Esophagus muscularis mucosa (tissue), 4 donors: ENCODE measurements at regions of chr5 and their contacts with region 1.

Region 1: GRCh38 chr5:67003935-67004729 is 192.5 kb downstream of the CD180 start:
- DNase-seq: peak; percentile 96
- H3K4me3 ChIP-seq: peak overlapping the region; percentile 63 to 70 (median 65)
- H3K27ac ChIP-seq: peak overlapping the region; percentile 87 to 93 (median 87)
- H3K4me1 ChIP-seq: peaks cover 35 to 55% (median 48%) of the 10 kb centered on the region in 4 donors
- H3K27me3 ChIP-seq: no peaks in the 10 kb centered on the region
- CTCF ChIP-seq: no peak
- EP300 ChIP-seq: no peak
- POLR2A ChIP-seq: peak; percentile 12

Region 2: DNA sequence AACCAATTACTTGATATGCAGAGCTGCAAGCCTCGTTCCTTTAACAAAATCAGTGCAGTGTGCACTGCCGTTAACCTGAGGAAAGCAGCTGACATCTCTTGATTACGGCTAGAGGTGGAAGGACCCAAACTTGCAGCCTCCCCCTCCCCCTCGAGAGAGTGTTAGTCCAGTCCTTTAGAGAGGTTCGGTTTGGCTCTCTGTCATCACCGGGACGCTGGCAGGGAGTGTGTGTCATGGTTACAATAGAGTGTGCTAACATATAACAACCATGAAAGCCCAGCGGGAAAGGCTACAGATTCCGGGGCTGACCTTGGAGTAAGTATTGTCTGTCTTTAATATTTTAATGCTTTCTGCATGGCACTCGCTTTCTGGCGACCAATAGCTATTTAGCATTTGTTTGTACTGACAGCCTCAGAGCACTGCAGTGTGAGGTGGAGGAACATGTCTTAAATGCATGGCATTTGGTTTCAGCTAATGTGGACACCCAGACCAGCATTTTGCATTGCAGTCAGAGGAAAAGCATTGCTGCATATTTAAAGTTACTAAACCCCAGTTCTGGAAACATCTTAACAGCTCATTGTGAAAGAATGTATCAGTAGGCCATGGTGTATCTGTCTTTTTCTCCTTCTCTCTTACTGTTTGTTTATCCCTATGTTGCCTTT is 45.0 kb before region 1 on chr5:
- intact Hi-C with region 1: loop called (anchors 5 kb)
- DNase-seq: no peak
- H3K4me3 ChIP-seq: peak overlapping the region; percentile 48 to 55 (median 50)
- H3K27ac ChIP-seq: peak overlapping the region; percentile 66 to 79 (median 72)
- H3K4me1 ChIP-seq: peaks cover 6 to 32% (median 29%) of the 10 kb centered on the region in 4 donors
- H3K27me3 ChIP-seq: no peaks in the 10 kb centered on the region
- CTCF ChIP-seq: no peak
- EP300 ChIP-seq: no peak
- POLR2A ChIP-seq: no peak

Region 3: DNA sequence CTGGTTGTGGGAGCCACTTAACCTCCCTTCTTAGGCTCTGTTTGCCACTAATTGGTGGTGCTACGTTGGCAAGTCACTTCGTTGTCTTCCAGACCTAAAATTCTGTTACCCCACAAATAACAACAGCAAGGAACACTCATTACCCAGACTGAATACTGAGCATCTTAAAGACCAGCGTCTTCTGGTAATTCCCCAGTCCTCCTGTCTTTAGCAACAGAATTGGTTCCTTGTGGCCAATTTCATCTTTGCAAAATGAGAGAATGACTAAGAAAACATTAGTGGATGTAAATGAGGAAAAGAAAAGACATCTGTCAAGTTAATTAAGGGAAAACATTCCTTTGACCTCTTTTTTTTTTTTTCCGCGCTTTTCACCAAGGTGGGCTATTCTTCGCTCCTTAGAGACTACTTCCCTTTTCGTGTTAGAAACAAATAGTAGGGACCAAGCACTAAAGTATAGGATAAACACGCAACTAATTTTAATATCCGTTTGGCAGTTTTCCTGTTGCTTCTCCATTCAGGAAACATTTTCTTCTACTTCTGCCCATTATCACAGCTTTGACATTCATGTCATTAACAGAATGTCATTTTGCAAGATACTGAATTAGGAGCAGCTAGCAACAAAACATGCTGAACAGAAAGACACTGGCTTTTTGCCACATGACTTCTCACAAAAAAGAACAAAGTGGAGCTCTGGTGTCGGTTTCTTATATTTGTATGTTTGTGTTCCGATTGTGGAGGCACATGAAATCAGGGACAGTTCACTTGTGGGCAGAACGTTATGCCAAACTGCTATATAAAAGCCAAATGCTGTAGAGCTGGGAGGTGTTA is 38.3 kb after region 1 on chr5:
- intact Hi-C with region 1: loop called (anchors 5 kb)
- DNase-seq: no peak
- H3K4me3 ChIP-seq: no peak overlapping the region
- H3K27ac ChIP-seq: peak overlapping the region in 1 of 4 donors; percentile 5
- H3K4me1 ChIP-seq: peaks cover 54 to 73% (median 64%) of the 10 kb centered on the region in 4 donors
- H3K27me3 ChIP-seq: no peaks in the 10 kb centered on the region
- CTCF ChIP-seq: no peak
- EP300 ChIP-seq: no peak
- POLR2A ChIP-seq: no peak

Region 4: GRCh38 chr5:67095346-67096171 is 91.4 kb after region 1 on chr5:
- intact Hi-C with region 1: loop called (anchors 5 kb)
- DNase-seq: no peak
- H3K4me3 ChIP-seq: peak overlapping the region; percentile 15 to 30 (median 18)
- H3K27ac ChIP-seq: peak overlapping the region; percentile 58 to 64 (median 62)
- H3K4me1 ChIP-seq: peaks cover 36 to 59% (median 57%) of the 10 kb centered on the region in 4 donors
- H3K27me3 ChIP-seq: no peaks in the 10 kb centered on the region
- CTCF ChIP-seq: no peak
- EP300 ChIP-seq: no peak
- POLR2A ChIP-seq: no peak

Region 5: GRCh38 chr5:67941614-67942401 is 937.7 kb after region 1 on chr5:
- intact Hi-C with region 1: no loop called
- DNase-seq: no peak
- H3K4me3 ChIP-seq: no peak overlapping the region
- H3K27ac ChIP-seq: peak overlapping the region; percentile 40 to 73 (median 55)
- H3K4me1 ChIP-seq: peaks cover 4 to 23% (median 17%) of the 10 kb centered on the region in 4 donors
- H3K27me3 ChIP-seq: no peaks in the 10 kb centered on the region
- CTCF ChIP-seq: no peak
- EP300 ChIP-seq: no peak
- POLR2A ChIP-seq: no peak